CD4-positive, alpha-beta memory T cell (primary cell): ENCODE measurements at regions of chr7 and their contacts with region 1.

Region 1: DNA sequence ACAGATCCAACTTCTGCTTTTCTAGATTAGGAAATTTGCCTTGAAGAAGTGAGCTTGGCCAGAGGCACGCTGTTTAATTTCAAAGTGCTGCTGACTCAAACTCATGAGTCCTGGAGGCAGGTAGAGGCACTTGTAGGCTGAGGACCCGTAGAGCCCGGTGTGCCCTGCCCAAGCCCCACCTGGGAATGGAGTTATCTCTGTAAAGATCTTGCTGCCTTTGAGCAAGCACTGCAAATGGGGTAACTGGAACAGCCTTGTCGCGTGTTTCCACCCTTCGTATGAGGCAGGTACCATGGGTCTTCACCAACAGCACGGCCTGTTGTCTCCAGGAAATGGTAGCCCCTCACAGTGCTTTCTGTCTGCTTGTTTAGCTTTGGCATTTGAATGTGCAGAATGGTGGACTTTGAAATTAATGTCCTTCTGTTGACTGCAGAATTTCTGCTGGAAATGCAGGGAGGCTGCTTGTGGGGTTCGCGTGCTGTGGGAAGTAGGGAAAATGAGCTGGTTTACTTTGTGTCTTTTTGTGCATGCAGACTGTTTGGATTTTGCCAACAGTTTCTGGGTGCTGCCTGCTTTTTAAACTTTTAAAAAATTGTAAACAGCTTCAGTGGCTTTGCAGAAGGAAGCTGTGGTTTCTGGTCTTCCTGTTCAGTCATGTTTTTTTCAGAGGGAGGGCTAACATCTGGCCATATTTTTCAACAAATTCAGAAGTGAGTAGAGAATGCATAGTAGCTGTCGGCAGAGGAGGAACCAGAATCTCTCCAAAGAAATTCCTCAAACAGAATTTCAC is 27.2 kb downstream of the CCM2 start:
- DNase-seq: peak; percentile 65 to 76 (median 67)
- H3K4me3 ChIP-seq: peak overlapping the region; percentile 97
- H3K4me3 Mint-ChIP-seq: peak overlapping the region; percentile 88 to 98 (median 95)
- H3K27ac ChIP-seq: peak overlapping the region; percentile 82
- H3K27ac Mint-ChIP-seq: peak overlapping the region; percentile 88 to 97 (median 92)
- H3K4me1 ChIP-seq: peaks cover 73% of the 10 kb centered on the region
- H3K4me1 Mint-ChIP-seq: peaks cover 37 to 78% (median 51%) of the 10 kb centered on the region in 4 donors
- H3K27me3 ChIP-seq: no peaks in the 10 kb centered on the region
- H3K27me3 Mint-ChIP-seq: no peaks in the 10 kb centered on the region

Region 2: DNA sequence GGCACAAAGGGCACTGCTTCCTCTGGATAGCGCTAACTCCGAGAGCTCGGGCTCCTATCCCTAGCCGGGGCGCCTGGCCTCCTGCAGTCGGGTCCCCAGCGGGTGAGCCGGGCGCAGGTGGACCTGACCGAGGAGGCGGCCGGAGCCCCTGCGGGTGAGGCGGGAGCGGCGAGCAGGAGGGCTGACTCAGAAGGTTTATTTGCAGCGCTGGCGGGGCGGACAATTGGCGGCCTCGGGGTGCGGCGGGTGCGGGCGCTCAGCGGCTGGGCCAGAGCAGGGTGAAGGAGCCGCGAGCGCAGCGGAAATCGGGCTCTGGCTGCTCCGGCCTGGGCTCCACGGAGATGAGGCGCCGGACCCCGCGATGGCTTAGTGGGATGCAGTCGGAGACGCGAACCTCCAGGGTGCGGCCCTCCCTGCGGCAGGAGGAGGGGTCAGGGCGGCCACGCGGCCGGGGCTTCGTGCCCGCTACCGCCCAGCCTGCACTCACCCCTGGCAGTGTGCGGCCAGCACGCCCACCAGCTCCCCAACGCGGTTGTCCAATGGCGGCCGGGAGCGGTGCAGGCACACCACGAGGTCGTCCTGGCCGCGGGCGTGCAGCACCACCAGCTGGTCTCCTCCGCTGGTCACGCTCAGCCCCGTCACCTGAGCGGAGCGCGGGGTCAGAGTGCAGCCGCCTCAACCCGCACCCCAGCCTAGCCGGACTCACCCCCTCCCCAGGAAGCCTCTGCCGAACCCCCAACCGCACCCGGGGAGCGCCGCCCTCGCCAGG is 64.5 kb before region 1 on chr7:
- CTCF ChIA-PET with region 1: interaction called, 4 read pairs
- POLR2A ChIA-PET with region 1: interaction called, 12 read pairs
- intact Hi-C with region 1: no loop called
- DNase-seq: no peak
- H3K4me3 ChIP-seq: no peak overlapping the region
- H3K4me3 Mint-ChIP-seq: no peak overlapping the region
- H3K27ac ChIP-seq: peak overlapping the region; percentile 26
- H3K27ac Mint-ChIP-seq: peak overlapping the region in 1 of 7 donors; percentile 79
- H3K4me1 ChIP-seq: peaks cover 19% of the 10 kb centered on the region
- H3K4me1 Mint-ChIP-seq: peaks cover 13 to 21% (median 18%) of the 10 kb centered on the region in 4 donors
- H3K27me3 ChIP-seq: no peaks in the 10 kb centered on the region
- H3K27me3 Mint-ChIP-seq: no peaks in the 10 kb centered on the region

Region 3: GRCh38 chr7:44986218-44987053 is 40.7 kb before region 1 on chr7:
- CTCF ChIA-PET with region 1: interaction called, 6 read pairs
- POLR2A ChIA-PET with region 1: interaction called, 551 read pairs
- intact Hi-C with region 1: no loop called
- DNase-seq: peak; percentile 94 to 96 (median 95)
- H3K4me3 ChIP-seq: peak overlapping the region; percentile 76 to 82
- H3K4me3 Mint-ChIP-seq: peak overlapping the region; percentile 95 to 98 (median 96)
- H3K27ac ChIP-seq: peak overlapping the region; percentile 98
- H3K27ac Mint-ChIP-seq: peak overlapping the region; percentile 98 to 100 (median 99)
- H3K4me1 ChIP-seq: peaks cover 54% of the 10 kb centered on the region
- H3K4me1 Mint-ChIP-seq: peaks cover 35 to 64% (median 48%) of the 10 kb centered on the region in 4 donors
- H3K27me3 ChIP-seq: no peaks in the 10 kb centered on the region
- H3K27me3 Mint-ChIP-seq: no peaks in the 10 kb centered on the region

Region 4: DNA sequence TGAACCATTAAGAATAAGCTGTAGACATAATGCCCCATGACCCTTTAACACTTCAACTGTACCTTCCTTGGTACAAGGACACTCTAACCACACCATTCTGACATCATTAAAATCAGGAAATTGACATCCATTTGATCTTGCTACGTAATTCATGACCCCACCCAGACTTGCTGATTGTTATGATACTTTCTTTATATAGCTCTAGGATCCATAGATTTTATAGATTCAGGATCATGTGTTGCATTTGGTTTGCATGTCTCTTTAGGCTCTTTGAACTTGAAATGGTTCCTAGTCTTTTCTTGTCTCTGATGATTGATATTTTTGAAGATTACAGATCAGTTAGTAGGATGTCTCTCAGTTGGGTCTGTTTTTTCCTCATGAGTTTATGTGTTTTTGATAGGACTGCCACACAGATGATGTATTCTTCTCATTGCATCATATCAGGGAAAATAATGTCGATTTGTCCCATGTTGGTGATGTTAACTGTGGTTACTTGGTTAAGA is 13.7 kb before region 1 on chr7:
- CTCF ChIA-PET with region 1: interaction called, 14 read pairs
- POLR2A ChIA-PET with region 1: interaction called, 56 read pairs
- intact Hi-C with region 1: no loop called
- DNase-seq: peak in 4 of 5 donors; percentile 55 to 71 (median 62)
- H3K4me3 ChIP-seq: no peak overlapping the region
- H3K4me3 Mint-ChIP-seq: peak overlapping the region in 3 of 8 donors; percentile 16 to 50 (median 41)
- H3K27ac ChIP-seq: no peak overlapping the region
- H3K27ac Mint-ChIP-seq: peak overlapping the region; percentile 41 to 92 (median 81)
- H3K4me1 ChIP-seq: peaks cover 23% of the 10 kb centered on the region
- H3K4me1 Mint-ChIP-seq: peaks cover 27 to 59% (median 39%) of the 10 kb centered on the region in 4 donors
- H3K27me3 ChIP-seq: no peaks in the 10 kb centered on the region
- H3K27me3 Mint-ChIP-seq: no peaks in the 10 kb centered on the region

Region 5: GRCh38 chr7:45061806-45062425 is 34.7 kb after region 1 on chr7:
- CTCF ChIA-PET with region 1: no interaction called
- POLR2A ChIA-PET with region 1: interaction called, 9 read pairs
- intact Hi-C with region 1: loop called (anchors 5 kb)
- DNase-seq: no peak
- H3K4me3 ChIP-seq: no peak overlapping the region
- H3K4me3 Mint-ChIP-seq: peak overlapping the region in 3 of 8 donors; percentile 8 to 64 (median 21)
- H3K27ac ChIP-seq: no peak overlapping the region
- H3K27ac Mint-ChIP-seq: peak overlapping the region; percentile 7 to 86 (median 43)
- H3K4me1 ChIP-seq: peaks cover 57% of the 10 kb centered on the region
- H3K4me1 Mint-ChIP-seq: peaks cover 34 to 84% (median 54%) of the 10 kb centered on the region in 4 donors
- H3K27me3 ChIP-seq: no peaks in the 10 kb centered on the region
- H3K27me3 Mint-ChIP-seq: no peaks in the 10 kb centered on the region

Region 6: GRCh38 chr7:45136106-45137060 is 109.2 kb after region 1 on chr7:
- CTCF ChIA-PET with region 1: interaction called, 17 read pairs
- POLR2A ChIA-PET with region 1: no interaction called
- intact Hi-C with region 1: loop called (anchors 1 kb)
- DNase-seq: peak; percentile 65 to 77 (median 74)
- H3K4me3 ChIP-seq: no peak overlapping the region
- H3K4me3 Mint-ChIP-seq: peak overlapping the region in 1 of 8 donors; percentile 55
- H3K27ac ChIP-seq: no peak overlapping the region
- H3K27ac Mint-ChIP-seq: peak overlapping the region in 5 of 7 donors; percentile 1 to 86 (median 73)
- H3K4me1 ChIP-seq: peaks cover 4% of the 10 kb centered on the region
- H3K4me1 Mint-ChIP-seq: peaks cover 6 to 11% (median 9%) of the 10 kb centered on the region in 4 donors
- H3K27me3 ChIP-seq: no peaks in the 10 kb centered on the region
- H3K27me3 Mint-ChIP-seq: no peaks in the 10 kb centered on the region